Activated CD8-positive, alpha-beta T cell treated with anti-CD3 and anti-CD28 coated beads for 36 hours (primary cell): ENCODE measurements at regions of chr2 and their contacts with region 1.

Region 1: DNA sequence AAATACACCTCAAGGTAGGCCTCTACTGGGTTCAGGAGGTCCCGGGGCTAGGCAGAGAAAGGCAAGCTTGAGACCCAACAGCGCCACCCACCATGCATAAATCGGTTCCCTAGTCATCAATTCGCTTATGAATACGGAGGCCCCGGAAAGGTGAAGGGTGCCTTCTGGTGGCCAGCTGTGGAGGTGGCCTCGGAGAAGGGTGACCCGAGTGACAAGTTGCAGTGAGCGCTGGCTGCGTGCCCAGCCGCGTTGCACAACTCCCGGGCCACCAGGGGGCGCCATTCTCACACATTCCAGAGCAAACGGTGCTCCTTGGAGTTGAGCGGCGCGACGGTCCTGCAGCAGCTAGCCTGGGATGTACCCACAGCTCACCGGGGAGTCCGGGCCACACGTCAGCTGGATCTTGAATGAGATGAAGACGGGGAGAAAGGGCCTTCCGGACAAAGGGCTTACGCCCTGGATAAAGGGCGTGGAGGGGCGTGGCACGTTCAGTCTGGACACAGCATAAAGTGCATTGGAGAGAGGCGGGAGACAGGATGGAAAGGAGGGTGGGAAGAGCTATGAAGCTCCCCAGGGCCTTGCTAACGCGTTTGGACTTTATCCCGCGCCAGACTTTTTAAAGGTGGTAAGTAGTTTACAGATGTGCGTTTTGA is 20.4 kb downstream of the TMSB10 start:
- DNase-seq: peak; percentile 100
- ATAC-seq: peak; percentile 81
- H3K4me3 Mint-ChIP-seq: peak overlapping the region; percentile 91
- H3K27ac Mint-ChIP-seq: peak overlapping the region; percentile 84
- H3K4me1 Mint-ChIP-seq: peaks cover 37% of the 10 kb centered on the region
- H3K27me3 Mint-ChIP-seq: no peaks in the 10 kb centered on the region
- CTCF ChIP-seq: peak; percentile 99

Region 2: DNA sequence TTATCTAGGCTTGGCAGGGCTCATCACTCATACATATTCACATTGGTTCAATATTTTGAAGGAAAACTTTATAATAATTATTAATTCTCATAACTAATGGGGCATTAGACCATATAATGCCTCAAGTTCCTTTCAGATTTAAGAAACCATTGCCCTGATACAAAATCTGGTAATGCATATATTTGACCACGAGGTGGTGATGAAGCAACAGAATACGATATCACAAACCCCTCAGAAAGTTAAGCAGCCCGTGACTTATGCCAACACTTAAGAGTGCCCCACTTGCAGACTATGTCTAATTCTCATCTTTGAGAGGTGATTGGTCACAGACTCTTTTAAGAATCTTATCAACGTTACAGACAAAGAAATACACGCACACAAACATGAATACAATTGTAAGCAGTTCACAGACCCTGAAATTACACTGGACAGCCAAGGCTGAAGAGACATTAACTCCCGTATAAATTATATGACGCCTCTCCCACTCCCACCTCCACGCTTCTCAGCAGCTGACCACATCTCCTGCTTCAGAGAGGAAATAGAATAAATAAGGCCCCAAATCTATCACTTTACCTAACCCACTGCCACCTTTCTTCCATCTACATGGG is 430.2 kb before region 1 on chr2:
- CTCF ChIA-PET with region 1: interaction called, 25 read pairs
- POLR2A ChIA-PET with region 1: interaction called, 3 read pairs
- intact Hi-C with region 1: loop called (anchors 2 kb)
- DNase-seq: peak; percentile 37
- ATAC-seq: peak; percentile 99
- H3K4me3 Mint-ChIP-seq: no peak overlapping the region
- H3K27ac Mint-ChIP-seq: no peak overlapping the region
- H3K4me1 Mint-ChIP-seq: peaks cover 15% of the 10 kb centered on the region
- H3K27me3 Mint-ChIP-seq: no peaks in the 10 kb centered on the region
- CTCF ChIP-seq: peak; percentile 74

Region 3: GRCh38 chr2:84846041-84846663 is 79.7 kb before region 1 on chr2:
- CTCF ChIA-PET with region 1: interaction called, 20 read pairs
- POLR2A ChIA-PET with region 1: interaction called, 9 read pairs
- intact Hi-C with region 1: no loop called
- DNase-seq: peak; percentile 57
- ATAC-seq: peak; percentile 51
- H3K4me3 Mint-ChIP-seq: peak overlapping the region; percentile 48
- H3K27ac Mint-ChIP-seq: peak overlapping the region; percentile 97
- H3K4me1 Mint-ChIP-seq: peaks cover 89% of the 10 kb centered on the region
- H3K27me3 Mint-ChIP-seq: no peaks in the 10 kb centered on the region
- CTCF ChIP-seq: no peak

Region 4: GRCh38 chr2:84881581-84882414 is 44.1 kb before region 1 on chr2:
- CTCF ChIA-PET with region 1: interaction called, 84 read pairs
- POLR2A ChIA-PET with region 1: interaction called, 25 read pairs
- intact Hi-C with region 1: loop called (anchors 2 kb)
- DNase-seq: peak; percentile 95
- ATAC-seq: peak; percentile 73
- H3K4me3 Mint-ChIP-seq: peak overlapping the region; percentile 96
- H3K27ac Mint-ChIP-seq: peak overlapping the region; percentile 94
- H3K4me1 Mint-ChIP-seq: peaks cover 56% of the 10 kb centered on the region
- H3K27me3 Mint-ChIP-seq: no peaks in the 10 kb centered on the region
- CTCF ChIP-seq: peak; percentile 72

Region 5: DNA sequence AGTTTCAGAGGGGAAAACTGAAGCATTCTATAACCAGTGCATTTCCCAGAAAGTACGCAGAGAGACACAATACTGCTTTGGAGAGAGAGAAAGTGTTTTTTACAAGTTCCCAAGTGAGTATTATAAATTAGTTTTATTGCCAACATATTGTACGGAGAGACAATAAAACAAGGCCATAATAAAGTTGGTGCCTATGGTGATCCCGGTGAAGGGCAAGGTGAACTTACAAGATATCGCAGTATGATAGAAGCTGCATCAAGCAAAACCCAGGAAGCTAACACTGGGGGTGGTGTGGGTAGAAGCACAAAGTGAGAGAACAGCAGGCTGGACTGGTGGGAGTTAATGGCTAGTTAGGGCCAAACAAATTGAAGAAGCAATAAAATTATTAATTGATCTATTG is 12.9 kb before region 1 on chr2:
- CTCF ChIA-PET with region 1: interaction called, 60 read pairs
- POLR2A ChIA-PET with region 1: interaction called, 170 read pairs
- intact Hi-C with region 1: loop called (anchors 2 kb)
- DNase-seq: no peak
- ATAC-seq: no peak
- H3K4me3 Mint-ChIP-seq: no peak overlapping the region
- H3K27ac Mint-ChIP-seq: no peak overlapping the region
- H3K4me1 Mint-ChIP-seq: peaks cover 41% of the 10 kb centered on the region
- H3K27me3 Mint-ChIP-seq: no peaks in the 10 kb centered on the region
- CTCF ChIP-seq: no peak

Region 6: GRCh38 chr2:84970868-84971509 is 45.1 kb after region 1 on chr2 and contains the start of gene KCMF1:
- CTCF ChIA-PET with region 1: interaction called, 14 read pairs
- POLR2A ChIA-PET with region 1: interaction called, 6 read pairs
- intact Hi-C with region 1: no loop called
- DNase-seq: peak; percentile 70
- ATAC-seq: peak; percentile 67
- H3K4me3 Mint-ChIP-seq: peak within 1 kb of the TSS; percentile 99
- H3K27ac Mint-ChIP-seq: peak within 1 kb of the TSS; percentile 100
- H3K4me1 Mint-ChIP-seq: peaks cover 36% of the 10 kb centered on the region
- H3K27me3 Mint-ChIP-seq: no peaks in the 10 kb centered on the region
- CTCF ChIP-seq: no peak
- total RNA-seq, gene KCMF1: 101 to 105 TPM

Region 7: DNA sequence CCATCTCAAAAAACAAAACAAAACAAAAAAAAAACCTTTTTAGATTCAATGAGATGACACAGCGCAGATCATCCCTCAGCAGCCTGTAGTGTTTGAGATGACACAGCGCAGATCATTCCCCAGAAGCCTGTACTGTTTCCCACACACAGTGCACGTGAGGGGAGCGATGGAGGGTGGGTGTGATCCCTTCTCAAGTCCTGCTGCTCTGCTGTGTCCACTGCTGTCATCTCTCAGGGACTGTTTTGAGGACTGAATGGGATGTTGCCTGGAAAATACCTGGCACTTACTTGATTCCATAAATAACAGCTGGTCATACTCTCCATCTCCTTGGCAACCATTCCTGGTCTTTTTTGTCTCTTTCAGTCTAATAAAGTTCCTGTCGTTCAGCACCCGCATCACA is 376.3 kb after region 1 on chr2:
- CTCF ChIA-PET with region 1: interaction called, 12 read pairs
- POLR2A ChIA-PET with region 1: no interaction called
- intact Hi-C with region 1: loop called (anchors 2 kb)
- DNase-seq: no peak
- ATAC-seq: no peak
- H3K4me3 Mint-ChIP-seq: no peak overlapping the region
- H3K27ac Mint-ChIP-seq: no peak overlapping the region
- H3K4me1 Mint-ChIP-seq: peaks cover 7% of the 10 kb centered on the region
- H3K27me3 Mint-ChIP-seq: peaks cover 3% of the 10 kb centered on the region
- CTCF ChIP-seq: no peak